H1 (cell line): ENCODE measurements at regions of chr3 and their contacts with region 1.

Region 1: GRCh38 chr3:112582244-112582874 is 20.5 kb downstream of the SLC35A5 start:
- DNase-seq: no peak
- H3K4me3 ChIP-seq: no peak overlapping the region
- H3K27ac ChIP-seq: no peak overlapping the region
- H3K4me1 ChIP-seq: no peaks in the 10 kb centered on the region; a peak in 1 of 7 replicates
- H3K27me3 ChIP-seq: no peaks in the 10 kb centered on the region
- CTCF ChIP-seq: peak in 2 of 3 experiments; percentile 30 to 47; a peak in 2 of 4 replicates
- EP300 ChIP-seq: no peak
- POLR2A ChIP-seq: no peak
- RAD21 ChIP-seq: peak; percentile 74 to 80

Region 2: GRCh38 chr3:112605285-112605684 is 22.9 kb after region 1 on chr3:
- CTCF ChIA-PET with region 1: interaction called, 13 read pairs
- POLR2A ChIA-PET with region 1: no interaction called
- DNase-seq: no peak
- H3K4me3 ChIP-seq: no peak overlapping the region
- H3K27ac ChIP-seq: no peak overlapping the region
- H3K4me1 ChIP-seq: no peaks in the 10 kb centered on the region
- H3K27me3 ChIP-seq: no peaks in the 10 kb centered on the region
- CTCF ChIP-seq: no peak
- EP300 ChIP-seq: no peak
- POLR2A ChIP-seq: no peak
- RAD21 ChIP-seq: no peak

Region 3: DNA sequence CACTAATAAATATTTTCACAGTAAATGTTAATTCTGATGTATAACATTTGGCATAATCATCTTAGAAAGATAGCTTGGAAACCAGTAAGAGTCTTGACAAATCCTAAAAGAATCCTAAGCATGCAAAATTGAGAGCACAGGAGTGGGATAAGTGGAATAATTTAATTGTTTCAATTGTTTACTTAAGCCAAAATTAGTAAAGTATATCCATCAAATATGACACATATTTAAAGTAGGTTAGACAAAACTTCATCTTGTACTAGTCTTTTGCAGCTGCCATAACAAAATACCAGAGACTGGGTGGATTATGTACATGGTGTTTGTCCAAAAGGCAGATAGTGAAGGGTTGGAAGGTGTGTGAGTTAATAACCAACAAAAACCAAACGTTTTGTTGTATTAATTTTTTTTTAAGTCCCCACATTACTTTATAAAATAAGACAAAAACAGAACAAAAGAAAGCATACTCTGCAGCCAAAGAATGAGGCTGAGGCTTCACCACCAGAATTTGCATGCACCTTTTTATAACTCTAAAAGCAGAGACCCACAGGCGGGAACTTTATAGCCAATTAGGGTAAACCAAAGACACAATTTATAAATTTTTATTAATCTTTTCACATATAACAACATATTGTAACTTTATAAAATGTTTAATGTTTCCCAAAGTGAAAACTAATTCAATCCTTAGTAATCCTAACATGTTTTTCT is 306.2 kb after region 1 on chr3:
- CTCF ChIA-PET with region 1: no interaction called
- POLR2A ChIA-PET with region 1: no interaction called
- DNase-seq: no peak
- H3K4me3 ChIP-seq: no peak overlapping the region
- H3K27ac ChIP-seq: no peak overlapping the region
- H3K4me1 ChIP-seq: peaks cover 0 to 12% (median 4%) of the 10 kb centered on the region in 4 experiments; a peak in 3 of 7 replicates
- H3K27me3 ChIP-seq: no peaks in the 10 kb centered on the region
- CTCF ChIP-seq: no peak
- EP300 ChIP-seq: no peak
- POLR2A ChIP-seq: no peak
- RAD21 ChIP-seq: no peak